Activated CD4-positive, alpha-beta T cell treated with anti-CD3 and anti-CD28 coated beads, Interleukin-2, amount 10 ng/mL, durations not matched to agents 24 days and 14 days (primary cell): ENCODE measurements at regions of chr12 and their contacts with region 1.

Region 1: GRCh38 chr12:53251477-53252348 is 16.4 kb upstream of the ESPL1 start:
- DNase-seq: peak; percentile 94
- H3K4me3 Mint-ChIP-seq: peak overlapping the region; percentile 95
- H3K27ac Mint-ChIP-seq: peak overlapping the region; percentile 93
- H3K4me1 Mint-ChIP-seq: peaks cover 41% of the 10 kb centered on the region
- H3K27me3 Mint-ChIP-seq: no peaks in the 10 kb centered on the region

Region 2: DNA sequence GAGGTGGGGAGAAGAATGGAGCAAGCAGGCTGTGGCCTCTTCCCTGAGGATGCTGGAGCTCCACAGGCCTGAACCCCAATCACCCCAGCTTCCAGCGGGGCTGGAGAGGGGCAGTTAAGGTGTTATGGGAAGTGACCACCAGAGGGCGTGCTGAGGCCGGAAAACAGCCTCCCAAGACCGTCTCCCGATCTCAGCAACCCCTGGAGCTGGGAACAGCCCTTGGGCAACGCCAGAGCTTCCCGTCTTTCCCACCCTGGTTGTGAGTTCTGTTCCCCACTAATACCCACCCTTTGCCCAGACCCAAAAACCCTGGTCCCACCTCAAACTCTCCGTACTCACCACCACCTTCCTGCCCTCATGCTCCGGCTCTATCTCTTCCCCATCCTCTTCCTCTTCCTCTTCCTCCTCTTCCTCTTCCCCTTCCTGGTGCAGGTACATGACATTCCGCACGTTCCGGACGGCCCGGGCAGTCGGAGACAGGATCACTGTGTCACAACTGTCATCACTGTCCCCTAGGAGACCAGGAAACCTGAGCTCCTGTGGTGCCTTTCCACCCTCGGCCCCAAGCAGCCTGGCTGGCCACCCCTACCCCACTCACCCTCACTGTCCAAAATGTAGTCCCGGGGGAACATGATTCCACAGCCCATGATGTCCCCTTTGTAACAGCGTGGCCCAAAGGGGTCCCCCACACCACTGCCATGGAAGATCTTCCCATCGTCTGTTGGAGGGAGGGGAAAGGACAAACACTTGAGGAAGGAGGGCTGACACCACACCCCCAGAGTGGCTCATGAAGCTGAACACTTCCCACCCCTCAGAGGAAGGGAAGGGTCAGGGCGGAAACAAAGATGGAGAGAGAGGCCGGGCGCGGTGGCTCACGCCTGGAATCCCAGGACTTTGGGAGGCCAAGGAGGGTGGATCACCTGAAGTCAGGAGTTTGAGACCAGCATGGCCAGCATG is 185.5 kb before region 1 on chr12:
- intact Hi-C with region 1: no loop called
- DNase-seq: peak; percentile 91
- H3K4me3 Mint-ChIP-seq: no peak overlapping the region
- H3K27ac Mint-ChIP-seq: peak overlapping the region; percentile 9
- H3K4me1 Mint-ChIP-seq: peaks cover 8% of the 10 kb centered on the region
- H3K27me3 Mint-ChIP-seq: no peaks in the 10 kb centered on the region

Region 3: DNA sequence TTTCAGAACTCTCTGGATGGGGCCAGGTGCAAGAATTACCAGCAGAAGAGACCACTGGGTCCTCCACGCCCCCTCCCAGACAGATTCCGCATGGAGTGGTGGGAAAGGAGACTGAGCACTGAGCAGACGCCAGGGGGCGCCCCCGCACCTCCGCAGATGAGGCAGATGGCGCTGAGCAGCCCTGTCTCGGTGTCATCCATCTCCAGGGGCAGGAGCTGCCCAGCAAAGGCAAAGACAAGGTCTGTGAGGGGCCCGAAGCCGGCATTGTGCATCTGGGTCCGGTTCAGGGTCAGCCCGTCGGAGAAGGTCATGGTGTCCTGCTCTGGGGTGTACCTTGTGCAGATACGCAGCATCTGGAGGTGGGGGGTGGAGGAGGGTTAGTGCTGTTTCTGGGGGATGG is 38.4 kb before region 1 on chr12:
- intact Hi-C with region 1: loop called (anchors 1 kb)
- DNase-seq: peak; percentile 95
- H3K4me3 Mint-ChIP-seq: peak overlapping the region; percentile 49
- H3K27ac Mint-ChIP-seq: peak overlapping the region; percentile 70
- H3K4me1 Mint-ChIP-seq: peaks cover 77% of the 10 kb centered on the region
- H3K27me3 Mint-ChIP-seq: no peaks in the 10 kb centered on the region

Region 4: DNA sequence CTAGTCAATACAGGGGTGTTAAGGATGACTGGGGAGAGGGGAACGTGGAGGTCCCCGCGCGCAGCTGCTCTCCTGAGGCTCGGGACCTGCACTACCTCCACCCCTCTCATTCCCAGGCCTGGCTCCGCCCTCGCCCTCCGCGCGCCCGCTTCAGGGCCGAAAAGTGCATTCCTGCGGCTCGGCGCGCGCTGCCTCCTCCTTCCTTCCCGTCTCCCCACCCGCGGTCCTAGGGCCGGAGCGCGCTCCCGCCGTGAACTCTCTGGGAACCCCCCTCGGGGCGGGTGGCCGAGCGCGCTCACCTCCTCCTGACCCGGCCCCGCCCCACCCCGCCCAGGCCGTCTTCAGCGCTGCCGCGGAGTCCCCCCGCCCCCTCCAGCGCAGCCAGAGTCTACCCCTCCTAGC is 30.9 kb before region 1 on chr12:
- intact Hi-C with region 1: loop called (anchors 1 kb)
- DNase-seq: peak; percentile 96
- H3K4me3 Mint-ChIP-seq: peak overlapping the region; percentile 97
- H3K27ac Mint-ChIP-seq: peak overlapping the region; percentile 90
- H3K4me1 Mint-ChIP-seq: peaks cover 82% of the 10 kb centered on the region
- H3K27me3 Mint-ChIP-seq: peaks cover 1% of the 10 kb centered on the region

Region 5: GRCh38 chr12:53231826-53232645 is 19.7 kb before region 1 on chr12 and contains the start of gene RARG:
- intact Hi-C with region 1: loop called (anchors 1 kb)
- DNase-seq: peak; percentile 87
- H3K4me3 Mint-ChIP-seq: peak within 1 kb of the TSS; percentile 82
- H3K27ac Mint-ChIP-seq: peak within 1 kb of the TSS; percentile 85
- H3K4me1 Mint-ChIP-seq: peaks cover 61% of the 10 kb centered on the region
- H3K27me3 Mint-ChIP-seq: no peaks in the 10 kb centered on the region
- total RNA-seq, gene RARG: 57.2 and 58.5 TPM in 2 replicates

Region 6: DNA sequence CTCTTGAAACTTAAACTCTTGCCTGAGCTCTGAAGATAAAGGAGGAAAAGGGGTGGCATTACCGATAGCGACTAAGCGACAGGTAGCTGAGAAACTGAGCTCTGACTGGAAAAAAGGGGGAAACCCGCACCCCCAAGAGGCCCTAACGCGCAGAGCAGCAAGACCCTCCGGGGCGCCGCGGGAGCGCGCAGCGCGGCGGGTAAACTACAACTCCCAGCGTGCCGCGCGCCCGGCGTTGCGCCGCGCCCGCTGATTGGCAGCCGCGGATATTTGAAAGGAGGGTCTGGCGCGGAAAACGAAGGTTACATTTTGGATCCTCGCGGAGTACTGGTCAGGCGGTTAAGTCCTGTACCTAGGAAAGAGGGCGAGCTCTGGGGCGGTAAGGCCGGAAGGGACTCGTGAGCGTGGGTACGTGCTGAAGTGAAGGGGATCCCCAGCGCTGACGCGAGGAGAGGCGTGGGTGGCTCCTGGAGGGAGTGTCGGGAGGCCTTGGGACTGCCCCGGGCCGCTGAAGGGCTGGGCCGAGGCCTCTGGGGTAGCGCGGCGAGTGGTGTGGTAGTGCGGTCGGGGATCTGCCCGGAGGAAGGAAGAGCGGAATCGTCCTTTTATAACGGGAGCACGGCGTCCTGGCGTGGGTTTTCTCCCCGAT is 16.4 kb after region 1 on chr12 and contains the start of gene ESPL1:
- intact Hi-C with region 1: loop called (anchors 1 kb)
- DNase-seq: peak; percentile 96
- H3K4me3 Mint-ChIP-seq: peak within 1 kb of the TSS; percentile 89
- H3K27ac Mint-ChIP-seq: peak within 1 kb of the TSS; percentile 92
- H3K4me1 Mint-ChIP-seq: peaks cover 51% of the 10 kb centered on the region
- H3K27me3 Mint-ChIP-seq: no peaks in the 10 kb centered on the region
- total RNA-seq, gene ESPL1: 71.8 and 76.7 TPM in 2 replicates

Region 7: GRCh38 chr12:53295070-53295890 is 43.6 kb after region 1 on chr12 and contains the start of gene PFDN5:
- intact Hi-C with region 1: loop called (anchors 5 kb)
- DNase-seq: peak; percentile 97
- H3K4me3 Mint-ChIP-seq: peak within 1 kb of the TSS; percentile 98
- H3K27ac Mint-ChIP-seq: peak within 1 kb of the TSS; percentile 90
- H3K4me1 Mint-ChIP-seq: peaks cover 33% of the 10 kb centered on the region
- H3K27me3 Mint-ChIP-seq: no peaks in the 10 kb centered on the region
- total RNA-seq, gene PFDN5: 319 and 342 TPM in 2 replicates